Colonic mucosa (tissue), 4 donors: ENCODE measurements at regions of chr1 and their contacts with region 1.

Region 1: DNA sequence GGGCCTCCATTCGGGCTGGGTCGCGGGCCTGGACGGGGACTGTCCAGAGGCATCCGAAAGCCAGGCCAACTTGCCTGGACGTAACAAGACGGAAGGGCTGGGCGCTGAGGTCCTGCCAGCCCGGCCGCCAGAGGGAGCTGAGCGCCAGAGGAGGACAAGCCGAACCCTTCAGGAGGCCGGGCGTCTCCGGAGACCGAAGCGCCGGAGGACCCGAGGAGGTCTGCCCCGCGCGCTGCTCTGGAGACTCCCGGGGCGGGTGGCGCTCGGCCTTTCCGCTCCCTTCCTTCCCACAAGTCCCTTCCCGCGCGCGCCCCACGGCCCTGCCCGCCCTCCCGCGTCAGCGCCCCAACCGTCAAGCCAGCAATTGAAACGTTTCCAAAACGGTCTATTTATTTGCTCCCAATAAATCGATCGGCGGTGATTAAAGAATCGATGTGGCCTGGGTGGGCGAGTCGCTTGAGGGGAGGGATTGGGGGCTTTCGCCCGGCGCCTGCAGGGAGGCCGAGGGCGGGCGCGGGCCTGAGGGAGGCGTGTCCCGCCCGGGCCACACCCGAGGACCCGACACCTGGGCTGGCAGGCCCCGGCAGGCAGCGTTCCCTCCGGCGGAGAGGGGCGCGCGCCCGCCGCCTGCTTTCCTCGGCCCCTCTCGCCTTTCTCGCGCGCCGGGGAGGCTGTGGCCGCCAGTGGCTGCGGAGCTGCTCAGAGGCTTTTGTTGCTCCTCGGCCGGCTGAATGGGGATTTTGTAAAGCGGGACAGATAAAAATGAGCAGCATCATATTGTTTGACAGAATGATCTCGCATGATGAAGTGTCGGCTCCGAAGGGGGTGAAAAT is 5.2 kb upstream of the FOXD3 start:
- DNase-seq: peak; percentile 81
- H3K4me3 ChIP-seq: peak overlapping the region; percentile 56
- H3K27ac ChIP-seq: no peak overlapping the region
- H3K4me1 ChIP-seq: peaks cover 14% of the 10 kb centered on the region
- H3K27me3 ChIP-seq: peaks cover 65% of the 10 kb centered on the region
- CTCF ChIP-seq: peak; percentile 66

Region 2: DNA sequence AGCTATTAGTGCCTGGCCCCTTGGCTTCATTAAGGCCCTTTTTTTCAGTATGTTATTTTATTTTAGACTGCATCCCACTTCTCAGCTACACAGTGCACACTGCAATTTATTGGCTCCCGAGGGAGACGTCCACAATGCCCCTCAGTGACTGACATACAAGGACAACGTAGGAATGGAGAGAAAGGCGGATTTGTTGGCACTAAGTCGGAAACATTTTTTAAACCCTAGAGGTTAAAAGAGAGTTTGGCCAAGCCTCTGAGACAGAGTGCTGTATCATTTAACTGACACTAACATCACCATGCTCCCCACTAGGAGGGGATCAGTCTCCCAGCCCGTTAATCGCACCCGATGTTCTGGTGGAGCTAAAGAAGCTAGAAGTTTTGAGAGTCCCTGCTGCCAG is 40.6 kb before region 1 on chr1:
- intact Hi-C with region 1: no loop called
- DNase-seq: no peak
- H3K4me3 ChIP-seq: no peak overlapping the region
- H3K27ac ChIP-seq: no peak overlapping the region
- H3K4me1 ChIP-seq: no peaks in the 10 kb centered on the region
- H3K27me3 ChIP-seq: no peaks in the 10 kb centered on the region
- CTCF ChIP-seq: no peak

Region 3: GRCh38 chr1:63403386-63403785 is 86.2 kb after region 1 on chr1:
- intact Hi-C with region 1: no loop called
- DNase-seq: no peak
- H3K4me3 ChIP-seq: no peak overlapping the region
- H3K27ac ChIP-seq: no peak overlapping the region
- H3K4me1 ChIP-seq: no peaks in the 10 kb centered on the region
- H3K27me3 ChIP-seq: no peaks in the 10 kb centered on the region
- CTCF ChIP-seq: no peak

Region 4: GRCh38 chr1:63442141-63442475 is 124.9 kb after region 1 on chr1:
- intact Hi-C with region 1: loop called (anchors 5 kb)
- DNase-seq: no peak
- H3K4me3 ChIP-seq: no peak overlapping the region
- H3K27ac ChIP-seq: no peak overlapping the region
- H3K4me1 ChIP-seq: no peaks in the 10 kb centered on the region
- H3K27me3 ChIP-seq: no peaks in the 10 kb centered on the region
- CTCF ChIP-seq: no peak

Region 5: GRCh38 chr1:63522891-63523728 is 205.9 kb after region 1 on chr1 and contains the starts of genes EFCAB7 and ITGB3BP:
- intact Hi-C with region 1: loop called (anchors 10 kb)
- DNase-seq: peak; percentile 90
- H3K4me3 ChIP-seq: peak within 1 kb of the TSS; percentile 48
- H3K27ac ChIP-seq: peak within 1 kb of the TSS; percentile 90
- H3K4me1 ChIP-seq: peaks cover 2% of the 10 kb centered on the region
- H3K27me3 ChIP-seq: no peaks in the 10 kb centered on the region
- CTCF ChIP-seq: no peak
- total RNA-seq, gene EFCAB7: 2.0 to 3.8 TPM
- total RNA-seq, gene ITGB3BP: 14.5 to 19.7 TPM